HepG2 (cell line): ENCODE measurements at regions of chr3 and their contacts with region 1.

Region 1: DNA sequence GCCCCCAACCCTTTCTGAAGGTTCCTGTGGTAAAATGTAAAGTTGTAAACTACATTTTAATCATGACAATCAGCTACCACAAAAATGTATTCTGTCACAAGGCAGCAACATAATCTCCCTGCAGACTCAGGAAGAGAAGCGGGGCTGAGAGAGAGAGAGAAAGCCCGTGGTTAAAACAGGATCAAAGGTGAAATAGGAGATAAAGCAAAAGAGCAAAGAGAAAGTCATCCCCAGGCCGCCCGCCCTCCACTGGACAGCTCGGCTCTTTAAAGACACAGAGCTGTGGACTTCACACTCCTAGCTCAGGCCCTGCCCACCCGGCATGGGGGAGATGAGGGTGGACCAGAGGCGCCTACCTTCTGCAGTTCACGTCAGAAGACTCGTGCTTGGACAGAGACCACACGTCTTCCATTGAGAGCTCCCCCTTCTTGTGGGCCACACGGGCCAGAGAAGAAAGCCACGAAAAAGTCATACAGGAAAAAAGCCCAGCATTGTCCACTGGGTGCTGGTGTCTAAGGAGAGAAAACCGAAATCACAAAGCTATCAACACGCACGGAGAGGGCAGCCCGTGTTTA is 29.4 kb downstream of the ABCC5 start:
- DNase-seq: peak; percentile 92
- ATAC-seq: peak; percentile 99
- H3K4me3 ChIP-seq: peak overlapping the region in 1 of 3 experiments; percentile 25; a peak in 1 of 6 replicates
- H3K27ac ChIP-seq: peak overlapping the region; percentile 80
- H3K4me1 ChIP-seq: peaks cover 84% of the 10 kb centered on the region
- H3K27me3 ChIP-seq: no peaks in the 10 kb centered on the region
- CTCF ChIP-seq: peak; percentile 57
- EP300 ChIP-seq: peak in 1 of 2 experiments; percentile 70; a peak in 1 of 4 replicates
- POLR2A ChIP-seq: peak; percentile 46 to 48; a peak in 3 of 4 replicates
- RAD21 ChIP-seq: peak; percentile 65; the same call in 1 of the 2 replicates

Region 2: DNA sequence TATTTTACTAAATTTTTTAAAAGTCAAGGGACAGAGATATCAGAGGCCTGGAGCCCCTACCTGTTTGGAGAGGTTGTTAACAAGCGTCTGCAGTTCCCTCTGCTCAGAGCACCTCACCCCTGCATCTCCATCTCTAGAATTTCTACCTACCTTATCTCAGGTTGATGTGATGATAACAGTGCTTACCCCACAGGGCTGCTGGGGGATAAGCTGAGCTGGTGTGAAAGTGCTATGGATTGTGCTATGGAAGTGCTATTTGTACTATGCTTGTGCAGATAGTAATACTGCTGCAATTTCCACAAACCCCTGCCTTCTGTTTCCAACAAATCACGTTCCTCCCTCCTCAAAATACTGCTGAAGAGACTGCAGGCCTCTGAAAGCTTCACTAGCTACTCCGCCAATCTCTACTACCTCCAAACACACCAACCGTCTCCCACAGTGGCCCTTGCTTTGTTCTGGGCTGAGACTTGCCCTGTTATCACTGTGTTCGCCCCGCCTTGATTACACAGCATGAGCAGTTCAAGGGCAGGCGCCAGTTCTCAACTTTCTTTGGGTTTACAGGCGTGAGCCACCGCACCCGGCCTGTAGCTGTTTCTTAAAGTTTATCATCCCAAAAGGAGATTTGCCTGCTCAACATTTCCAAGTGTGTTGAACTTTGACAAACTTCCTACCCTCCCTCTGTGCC is 75.3 kb before region 1 on chr3:
- CTCF ChIA-PET with region 1: no interaction called
- POLR2A ChIA-PET with region 1: interaction called, 11 read pairs
- in situ Hi-C with region 1: no loop called
- intact Hi-C with region 1: loop called (anchors 2 kb)
- DNase-seq: peak; percentile 55
- ATAC-seq: peak; percentile 77
- H3K4me3 ChIP-seq: peak overlapping the region in 2 of 3 experiments; percentile 8 to 43; a peak in 2 of 6 replicates
- H3K27ac ChIP-seq: no peak overlapping the region
- H3K4me1 ChIP-seq: peaks cover 54% of the 10 kb centered on the region
- H3K27me3 ChIP-seq: no peaks in the 10 kb centered on the region; a peak in 1 of 5 replicates
- CTCF ChIP-seq: no peak
- EP300 ChIP-seq: no peak
- POLR2A ChIP-seq: no peak
- RAD21 ChIP-seq: no peak

Region 3: GRCh38 chr3:184017672-184018423 is 29.5 kb after region 1 on chr3 and contains the start of gene ABCC5:
- CTCF ChIA-PET with region 1: no interaction called
- POLR2A ChIA-PET with region 1: interaction called, 3 read pairs
- in situ Hi-C with region 1: no loop called
- intact Hi-C with region 1: loop called (anchors 2 kb)
- DNase-seq: peak; percentile 85
- ATAC-seq: peak; percentile 99
- H3K4me3 ChIP-seq: peak within 1 kb of the TSS; percentile 73 to 97 (median 79)
- H3K27ac ChIP-seq: peak within 1 kb of the TSS; percentile 30
- H3K4me1 ChIP-seq: peaks cover 32% of the 10 kb centered on the region
- H3K27me3 ChIP-seq: no peaks in the 10 kb centered on the region
- CTCF ChIP-seq: peak; percentile 42; the same call in 1 of the 2 replicates
- EP300 ChIP-seq: no peak
- POLR2A ChIP-seq: peak; percentile 31 to 89; a peak in 2 of 4 replicates
- RAD21 ChIP-seq: 0 out of 2 replicates have a peak, but pooled peaks have one; percentile 1
- total RNA-seq, gene ABCC5: 7.8 and 12.7 TPM in 2 replicates